ENCODE measurements at regions of chr1 and their contacts with region 1.

Region 1: GRCh38 chr1:194295685-194296084 is 1109.3 kb upstream of the B3GALT2 start:
- DNase-seq: peak; percentile 82
- H3K4me3 Mint-ChIP-seq: no peak overlapping the region
- H3K27ac Mint-ChIP-seq: no peak overlapping the region
- H3K4me1 Mint-ChIP-seq: peaks cover 9% of the 10 kb centered on the region
- H3K27me3 Mint-ChIP-seq: no peaks in the 10 kb centered on the region

Region 2: GRCh38 chr1:192477630-192478029 is 1818.1 kb before region 1 on chr1:
- intact Hi-C with region 1: loop called (anchors 5 kb)
- DNase-seq: no peak
- H3K4me3 Mint-ChIP-seq: no peak overlapping the region
- H3K27ac Mint-ChIP-seq: no peak overlapping the region
- H3K4me1 Mint-ChIP-seq: peaks cover 2% of the 10 kb centered on the region
- H3K27me3 Mint-ChIP-seq: peaks cover 7% of the 10 kb centered on the region

Region 3: GRCh38 chr1:193121616-193122593 is 1173.8 kb before region 1 on chr1 and contains the start of gene CDC73:
- intact Hi-C with region 1: loop called (anchors 10 kb)
- DNase-seq: peak; percentile 99
- H3K4me3 Mint-ChIP-seq: peak within 1 kb of the TSS; percentile 100
- H3K27ac Mint-ChIP-seq: peak within 1 kb of the TSS; percentile 95
- H3K4me1 Mint-ChIP-seq: peaks cover 43% of the 10 kb centered on the region
- H3K27me3 Mint-ChIP-seq: peaks cover 10% of the 10 kb centered on the region
- total RNA-seq, gene CDC73: 55.2 and 56.0 TPM in 2 replicates

Region 4: DNA sequence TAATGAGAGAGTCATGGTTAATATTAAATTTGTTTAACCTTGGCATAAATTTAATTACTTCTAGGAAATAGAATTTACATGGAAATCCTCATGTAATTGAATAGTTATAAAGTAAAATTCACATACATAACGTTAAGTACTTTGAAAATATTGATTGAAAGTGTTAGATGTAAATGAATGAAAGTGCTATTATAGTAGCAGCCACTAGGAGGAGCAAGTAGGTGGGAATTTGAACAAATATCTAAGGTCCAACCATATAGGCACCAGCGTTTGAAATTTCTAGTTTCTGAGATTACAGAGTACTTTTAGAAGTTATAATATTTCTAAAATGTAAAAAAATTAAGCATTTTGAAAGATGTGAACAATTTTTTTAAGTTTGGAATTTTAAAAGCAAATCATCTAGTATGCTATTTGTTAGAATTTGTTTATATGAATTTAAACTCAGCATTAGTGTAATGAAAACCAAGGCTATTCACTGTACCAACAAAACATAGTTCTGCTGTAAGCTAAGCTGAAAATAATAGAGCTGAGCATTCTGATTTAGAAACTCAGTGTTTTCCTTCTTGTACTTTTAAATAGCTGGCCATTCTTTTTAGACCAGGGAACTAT is 1112.6 kb before region 1 on chr1:
- intact Hi-C with region 1: loop called (anchors 1 kb)
- DNase-seq: peak; percentile 76
- H3K4me3 Mint-ChIP-seq: no peak overlapping the region
- H3K27ac Mint-ChIP-seq: no peak overlapping the region
- H3K4me1 Mint-ChIP-seq: peaks cover 23% of the 10 kb centered on the region
- H3K27me3 Mint-ChIP-seq: no peaks in the 10 kb centered on the region

Region 5: GRCh38 chr1:193406901-193407300 is 888.8 kb before region 1 on chr1:
- intact Hi-C with region 1: loop called (anchors 5 kb)
- DNase-seq: peak; percentile 70
- H3K4me3 Mint-ChIP-seq: no peak overlapping the region
- H3K27ac Mint-ChIP-seq: no peak overlapping the region
- H3K4me1 Mint-ChIP-seq: peaks cover 23% of the 10 kb centered on the region
- H3K27me3 Mint-ChIP-seq: no peaks in the 10 kb centered on the region

Region 6: DNA sequence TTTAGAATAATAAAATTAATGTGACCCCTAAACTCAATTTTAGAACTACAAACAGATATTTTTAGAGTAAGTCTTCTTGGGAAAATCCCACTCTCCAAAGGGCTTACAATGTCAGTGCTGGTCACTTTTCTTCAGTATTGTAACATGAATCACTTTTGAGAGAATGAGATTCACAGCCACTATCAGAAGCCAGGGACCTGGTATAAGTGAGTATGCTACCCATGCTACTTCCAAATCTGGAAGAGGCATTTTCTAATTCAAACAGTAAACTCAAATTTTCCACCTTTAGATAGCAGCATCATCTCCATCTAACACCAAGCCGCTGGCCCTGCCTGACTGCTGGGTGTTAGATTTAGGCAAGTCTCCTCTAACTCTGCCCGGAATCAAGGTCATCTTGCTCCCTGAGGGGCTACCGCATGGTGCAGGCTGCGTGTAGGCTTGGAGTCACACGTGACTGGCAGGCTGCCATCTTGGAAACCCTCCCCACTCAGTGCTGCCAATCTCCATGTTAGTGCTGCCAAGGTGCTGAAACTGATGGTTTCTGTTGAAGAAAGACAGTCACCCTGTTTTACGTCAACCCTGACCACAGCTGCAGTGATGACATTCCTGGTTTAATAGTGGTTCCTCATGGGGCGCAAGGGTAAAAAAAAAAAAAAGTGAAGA is 226.4 kb before region 1 on chr1:
- intact Hi-C with region 1: no loop called
- DNase-seq: no peak
- H3K4me3 Mint-ChIP-seq: no peak overlapping the region
- H3K27ac Mint-ChIP-seq: no peak overlapping the region
- H3K4me1 Mint-ChIP-seq: no peaks in the 10 kb centered on the region
- H3K27me3 Mint-ChIP-seq: no peaks in the 10 kb centered on the region

Region 7: GRCh38 chr1:194117582-194117981 is 178.1 kb before region 1 on chr1:
- intact Hi-C with region 1: no loop called
- DNase-seq: no peak
- H3K4me3 Mint-ChIP-seq: no peak overlapping the region
- H3K27ac Mint-ChIP-seq: no peak overlapping the region
- H3K4me1 Mint-ChIP-seq: no peaks in the 10 kb centered on the region
- H3K27me3 Mint-ChIP-seq: no peaks in the 10 kb centered on the region

Region 8: GRCh38 chr1:194209920-194210319 is 85.8 kb before region 1 on chr1:
- intact Hi-C with region 1: no loop called
- DNase-seq: no peak
- H3K4me3 Mint-ChIP-seq: no peak overlapping the region
- H3K27ac Mint-ChIP-seq: no peak overlapping the region
- H3K4me1 Mint-ChIP-seq: no peaks in the 10 kb centered on the region
- H3K27me3 Mint-ChIP-seq: no peaks in the 10 kb centered on the region

Region 9: DNA sequence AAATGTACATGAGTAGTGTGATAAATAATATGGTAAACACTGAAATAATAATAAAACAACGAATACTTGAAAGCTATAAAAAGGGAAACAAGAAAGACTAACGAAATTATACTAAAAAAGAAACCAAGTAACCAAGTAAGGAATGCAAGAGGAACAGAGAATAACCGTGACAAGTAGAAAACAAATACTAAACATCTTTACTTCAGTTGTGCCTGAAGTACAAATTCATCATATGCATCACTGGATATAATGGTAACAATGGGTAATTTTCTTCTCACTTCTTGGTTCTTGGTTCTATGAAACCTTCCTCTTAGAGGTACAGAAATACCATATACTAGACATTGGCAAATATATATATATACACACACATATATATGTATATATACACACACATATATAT is 15.7 kb before region 1 on chr1:
- intact Hi-C with region 1: loop called (anchors 2 kb)
- DNase-seq: no peak
- H3K4me3 Mint-ChIP-seq: no peak overlapping the region
- H3K27ac Mint-ChIP-seq: no peak overlapping the region
- H3K4me1 Mint-ChIP-seq: no peaks in the 10 kb centered on the region
- H3K27me3 Mint-ChIP-seq: no peaks in the 10 kb centered on the region

Measured in activated CD4-positive, alpha-beta T cell treated with anti-CD3 and anti-CD28 coated beads, Interleukin-2, amount 10 ng/mL, durations not matched to agents 24 days and 14 days (primary cell).